ENCODE measurements at regions of chr6 and their contacts with region 1.

Region 1: DNA sequence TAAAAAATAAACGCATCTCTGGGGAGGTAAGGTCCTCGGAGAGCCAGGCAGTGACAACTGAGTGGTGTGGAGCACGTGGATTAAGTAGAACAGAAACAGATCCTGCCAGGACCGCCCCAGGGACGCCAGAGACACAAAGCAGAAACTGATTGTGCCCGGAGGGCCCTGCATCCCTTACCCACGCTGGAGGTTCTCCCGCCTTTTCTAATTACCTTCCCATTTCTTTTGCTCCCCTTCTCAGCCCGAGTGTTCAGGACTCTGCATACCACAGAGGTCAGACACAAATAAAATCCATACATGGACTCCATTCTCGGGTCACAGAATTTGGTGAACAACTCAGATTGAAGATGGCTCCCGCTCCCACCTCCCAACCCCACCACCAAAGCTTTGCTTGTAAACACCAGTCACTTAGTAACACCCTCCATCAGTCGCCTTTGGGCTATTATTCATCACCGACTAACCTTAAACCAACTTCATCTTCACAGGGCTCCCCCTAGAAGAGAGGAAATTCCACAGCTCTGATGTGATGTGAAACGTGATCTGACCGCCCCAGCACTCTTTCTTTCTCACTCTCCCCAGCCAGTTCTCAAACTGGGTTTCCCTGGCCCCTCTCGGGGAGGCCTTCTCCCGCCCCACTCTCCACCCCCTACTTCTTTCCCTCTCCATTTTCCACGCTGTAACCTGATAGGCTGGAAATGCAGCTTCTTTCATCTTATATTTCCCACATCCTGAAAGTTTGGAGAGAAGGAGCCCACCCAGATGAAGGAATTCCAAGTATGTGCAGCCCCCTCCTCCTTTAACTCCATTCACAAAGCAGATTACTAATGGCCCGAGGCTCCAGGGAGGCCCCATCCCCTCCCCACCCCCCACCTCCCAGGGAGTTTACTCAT is 32.5 kb upstream of the PIM1 start:
- DNase-seq: peak; percentile 48

Region 2: DNA sequence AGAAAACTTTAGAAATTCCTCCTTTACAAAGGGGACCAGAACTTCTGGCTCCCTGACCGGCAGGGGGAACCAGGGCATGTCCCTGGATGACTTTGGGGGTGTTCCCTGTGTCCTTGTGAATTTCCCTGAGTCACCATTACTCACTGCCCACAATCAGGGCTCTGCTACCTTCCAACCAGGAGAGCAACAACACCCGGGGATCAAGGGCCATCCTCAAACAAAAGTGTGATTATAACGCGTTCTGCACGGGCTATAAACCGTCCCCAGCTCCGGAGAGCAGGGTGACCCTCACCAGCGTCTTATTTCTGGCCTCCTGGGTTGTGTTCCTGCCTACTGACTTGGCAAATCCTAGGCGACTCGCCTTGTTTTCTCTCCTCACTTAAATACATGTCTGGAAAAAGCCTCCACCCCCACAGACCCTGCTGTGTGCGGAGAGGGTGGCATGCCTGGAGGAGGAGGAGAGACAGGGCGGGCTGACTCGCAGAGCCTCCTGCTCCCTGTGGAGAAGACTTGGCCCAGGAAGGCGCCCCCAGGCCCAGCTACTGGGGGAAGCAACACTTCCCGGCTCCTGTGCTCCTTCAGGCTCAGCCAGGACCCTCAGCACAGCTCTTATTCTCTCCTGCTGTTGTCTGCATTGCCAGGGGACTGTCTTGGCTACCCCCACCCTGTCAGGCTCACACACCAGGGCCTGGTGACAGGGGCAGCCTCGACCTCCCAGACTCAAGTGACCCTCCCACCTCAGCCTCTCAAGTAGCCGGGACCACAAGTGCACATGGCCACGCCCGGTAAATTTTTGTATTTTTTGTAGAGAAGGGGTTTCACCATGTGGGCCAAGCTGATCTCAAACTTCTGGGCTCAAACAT is 77.9 kb before region 1 on chr6:
- CTCF ChIA-PET with region 1: interaction called, 6 read pairs
- POLR2A ChIA-PET with region 1: interaction called, 11 read pairs
- DNase-seq: peak; percentile 46

Region 3: GRCh38 chr6:37110500-37111461 is 26.7 kb before region 1 on chr6:
- CTCF ChIA-PET with region 1: no interaction called
- POLR2A ChIA-PET with region 1: interaction called, 17 read pairs
- DNase-seq: no peak

Region 4: DNA sequence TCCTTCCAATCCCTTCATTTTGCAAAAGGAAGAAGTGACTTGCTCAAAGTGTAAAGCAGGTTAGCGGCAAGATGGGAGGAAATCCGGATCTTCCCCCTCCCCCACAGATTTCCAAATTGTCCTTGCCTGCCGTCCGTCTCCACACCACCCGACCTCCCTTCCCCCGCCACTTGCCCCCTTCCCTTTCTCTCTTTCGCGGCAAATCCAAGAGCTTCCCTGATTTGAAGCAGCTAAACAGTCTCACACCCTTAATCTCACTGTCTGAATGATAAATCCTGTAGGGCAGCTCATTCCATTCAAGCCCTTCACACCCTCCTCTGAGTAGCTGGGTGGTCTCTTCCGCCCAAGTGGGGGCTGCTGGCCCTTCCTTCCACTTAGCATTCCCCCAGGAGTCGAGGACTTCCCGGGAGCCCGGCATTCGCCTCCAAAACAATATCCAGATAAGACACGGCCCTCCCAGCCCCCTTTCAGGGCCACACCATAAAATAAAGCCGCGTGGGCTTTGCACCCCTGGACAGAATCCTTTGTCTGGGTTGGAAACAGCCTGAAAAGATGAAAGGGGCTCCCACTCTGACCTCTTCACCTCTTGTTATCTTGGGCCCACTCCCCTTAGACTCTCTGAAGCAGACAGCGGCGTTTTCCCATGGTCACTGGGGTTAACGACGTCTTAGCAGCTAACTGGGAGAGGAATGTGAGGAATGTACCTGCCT is 11.5 kb before region 1 on chr6:
- CTCF ChIA-PET with region 1: interaction called, 4 read pairs
- POLR2A ChIA-PET with region 1: interaction called, 13 read pairs
- DNase-seq: no peak

Region 5: GRCh38 chr6:37190159-37190535 is 52.7 kb after region 1 on chr6:
- CTCF ChIA-PET with region 1: no interaction called
- POLR2A ChIA-PET with region 1: no interaction called
- DNase-seq: no peak

Region 6: GRCh38 chr6:37417393-37417792 is 279.9 kb after region 1 on chr6:
- CTCF ChIA-PET with region 1: no interaction called
- POLR2A ChIA-PET with region 1: no interaction called
- DNase-seq: no peak

Region 7: DNA sequence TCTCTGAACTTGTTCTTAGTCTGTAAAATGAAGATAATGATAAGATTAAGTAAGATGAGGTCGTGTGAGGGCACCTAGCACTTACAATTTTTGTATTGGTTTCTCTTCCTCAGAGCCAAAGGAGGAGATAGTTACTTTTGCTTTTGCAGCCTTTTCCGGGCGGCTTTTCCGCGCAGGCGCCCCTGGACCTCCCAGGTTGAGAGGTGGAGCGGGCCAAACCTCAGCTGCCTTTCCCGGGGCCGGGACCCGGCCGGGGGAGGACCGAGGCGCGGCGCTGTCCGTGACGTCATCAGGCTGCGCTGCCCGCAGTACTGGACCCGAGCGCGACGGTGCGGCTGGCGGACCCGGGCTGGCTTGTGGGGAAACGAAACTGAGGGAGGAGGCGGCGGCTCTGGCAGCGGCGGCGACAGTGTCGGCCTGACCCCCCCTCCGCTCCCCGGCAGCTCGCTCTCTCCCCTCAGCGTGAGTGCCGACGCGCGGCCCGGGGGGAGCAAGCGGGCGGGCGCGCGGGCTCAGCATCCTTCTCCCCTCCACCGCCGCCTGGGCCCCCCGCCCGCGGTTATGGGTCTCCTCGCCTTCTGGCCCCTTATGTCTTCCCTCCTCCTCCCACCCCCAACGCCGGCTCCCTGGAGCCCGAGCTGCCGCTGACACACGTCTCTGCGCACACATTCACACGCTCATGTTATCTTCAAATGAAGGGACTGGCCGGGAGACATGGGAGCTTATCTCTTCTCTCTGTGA is 295.6 kb after region 1 on chr6 and contains the start of gene CMTR1:
- CTCF ChIA-PET with region 1: no interaction called
- POLR2A ChIA-PET with region 1: no interaction called
- DNase-seq: peak; percentile 97